ENCODE measurements at regions of chr10 and their contacts with region 1.

Region 1: DNA sequence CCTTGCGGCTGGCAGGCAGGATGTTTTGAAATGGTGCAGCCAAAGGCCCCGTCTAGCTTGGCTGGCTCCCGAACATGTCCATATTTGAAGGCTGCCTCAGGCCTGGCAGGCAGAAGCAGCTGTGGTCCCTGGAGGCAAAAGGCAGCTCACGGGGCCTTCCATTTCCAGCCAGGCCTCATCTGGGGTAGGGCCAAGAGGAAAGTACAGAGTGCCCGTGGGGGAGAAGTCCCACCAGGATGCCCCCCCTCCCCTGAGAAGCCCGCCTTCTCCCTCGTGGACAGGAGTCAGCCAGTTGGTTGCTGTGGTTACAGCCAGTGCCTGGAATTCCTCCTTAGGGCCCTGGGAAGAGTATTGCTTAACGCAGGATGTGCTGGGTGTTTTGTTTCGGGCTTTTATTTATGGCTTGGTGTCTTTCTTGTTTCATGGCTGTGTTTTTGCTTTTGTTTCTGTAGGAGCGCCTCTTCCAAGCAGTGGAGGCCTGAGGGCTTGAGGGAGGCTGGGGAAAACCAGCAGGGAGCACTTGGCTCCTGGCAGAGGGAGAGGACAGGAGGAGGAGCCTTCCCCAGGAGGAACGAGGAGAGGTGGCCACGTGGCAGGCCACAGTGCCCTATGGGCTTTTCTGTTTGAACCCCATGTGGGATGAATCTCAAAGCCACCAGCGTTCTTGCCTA is 45.4 kb downstream of the CHST3 start:
- DNase-seq: peak; percentile 70 to 99
- H3K4me3 ChIP-seq: no peak overlapping the region
- H3K27ac ChIP-seq: peak overlapping the region; percentile 89
- H3K4me1 ChIP-seq: peaks cover 63% of the 10 kb centered on the region
- H3K27me3 ChIP-seq: no peaks in the 10 kb centered on the region
- CTCF ChIP-seq: no peak
- POLR2A ChIP-seq: no peak

Region 2: DNA sequence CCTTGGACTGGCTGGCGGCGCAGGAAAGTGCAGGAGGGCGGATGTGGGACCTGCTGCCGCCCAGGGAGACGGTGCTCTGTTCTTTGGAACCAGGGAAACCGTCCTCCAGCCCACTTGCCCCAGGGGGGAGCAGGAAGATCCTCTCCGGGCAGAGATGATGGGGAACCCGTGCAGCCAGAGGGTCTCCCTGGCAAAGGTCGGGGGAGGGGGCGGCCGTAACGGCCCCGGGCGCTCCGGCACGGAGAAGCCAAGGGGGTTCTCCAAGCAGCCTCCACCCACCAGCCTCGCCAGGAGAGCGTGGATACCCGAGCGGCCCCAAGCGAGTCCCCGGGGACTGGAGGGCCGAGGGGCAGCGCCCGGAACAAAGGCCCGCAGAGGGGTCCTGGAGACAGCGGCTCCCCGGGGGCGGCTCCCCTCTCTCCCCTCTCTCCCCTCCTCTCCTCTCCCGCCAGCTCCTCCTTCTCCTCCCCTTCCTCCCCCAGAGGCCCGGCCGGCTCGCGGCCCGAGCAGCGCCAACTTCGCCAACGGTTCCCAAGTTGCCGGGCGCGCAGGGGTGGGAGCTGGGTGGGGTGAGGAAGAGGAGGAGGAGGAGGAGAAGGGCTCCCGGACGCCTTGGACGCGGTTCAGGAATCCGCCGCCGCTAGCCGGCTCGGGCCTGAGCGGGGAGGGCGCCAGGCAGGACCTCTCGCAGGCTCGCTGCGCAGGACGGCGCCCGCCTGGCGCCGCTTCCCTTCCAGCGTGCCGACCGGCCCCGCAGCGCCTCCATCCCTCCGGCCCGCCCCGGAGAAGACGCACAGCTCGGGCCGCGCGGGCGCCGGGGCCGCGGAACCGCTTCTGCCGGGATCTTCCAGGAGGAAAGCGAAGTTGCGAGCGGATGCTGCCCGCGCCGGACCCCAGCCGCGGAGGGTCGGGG is 45.5 kb before region 1 on chr10 and contains the start of gene CHST3:
- intact Hi-C with region 1: loop called (anchors 10 kb)
- DNase-seq: no peak
- H3K4me3 ChIP-seq: peak within 1 kb of the TSS; percentile 59 to 70
- H3K27ac ChIP-seq: peak within 1 kb of the TSS; percentile 98
- H3K4me1 ChIP-seq: peaks cover 53% of the 10 kb centered on the region
- H3K27me3 ChIP-seq: no peaks in the 10 kb centered on the region
- CTCF ChIP-seq: peak in 1 of 3 experiments; percentile 9
- POLR2A ChIP-seq: no peak
- total RNA-seq, gene CHST3: 26.0 TPM

Region 3: GRCh38 chr10:72140174-72140573 is 130.6 kb after region 1 on chr10:
- intact Hi-C with region 1: no loop called
- DNase-seq: no peak
- H3K4me3 ChIP-seq: no peak overlapping the region
- H3K27ac ChIP-seq: no peak overlapping the region
- H3K4me1 ChIP-seq: no peaks in the 10 kb centered on the region
- H3K27me3 ChIP-seq: no peaks in the 10 kb centered on the region
- CTCF ChIP-seq: no peak
- POLR2A ChIP-seq: no peak

Measured in vagina (tissue), 2 donors.